Left cardiac atrium (tissue), 4 donors: ENCODE measurements at regions of chr3 and their contacts with region 1.

Region 1: GRCh38 chr3:50235716-50236496 is at the start of gene GNAI2:
- DNase-seq: peak; percentile 99
- ATAC-seq: peak; percentile 91 to 92
- total RNA-seq, gene GNAI2: 179 to 181 TPM

Region 2: DNA sequence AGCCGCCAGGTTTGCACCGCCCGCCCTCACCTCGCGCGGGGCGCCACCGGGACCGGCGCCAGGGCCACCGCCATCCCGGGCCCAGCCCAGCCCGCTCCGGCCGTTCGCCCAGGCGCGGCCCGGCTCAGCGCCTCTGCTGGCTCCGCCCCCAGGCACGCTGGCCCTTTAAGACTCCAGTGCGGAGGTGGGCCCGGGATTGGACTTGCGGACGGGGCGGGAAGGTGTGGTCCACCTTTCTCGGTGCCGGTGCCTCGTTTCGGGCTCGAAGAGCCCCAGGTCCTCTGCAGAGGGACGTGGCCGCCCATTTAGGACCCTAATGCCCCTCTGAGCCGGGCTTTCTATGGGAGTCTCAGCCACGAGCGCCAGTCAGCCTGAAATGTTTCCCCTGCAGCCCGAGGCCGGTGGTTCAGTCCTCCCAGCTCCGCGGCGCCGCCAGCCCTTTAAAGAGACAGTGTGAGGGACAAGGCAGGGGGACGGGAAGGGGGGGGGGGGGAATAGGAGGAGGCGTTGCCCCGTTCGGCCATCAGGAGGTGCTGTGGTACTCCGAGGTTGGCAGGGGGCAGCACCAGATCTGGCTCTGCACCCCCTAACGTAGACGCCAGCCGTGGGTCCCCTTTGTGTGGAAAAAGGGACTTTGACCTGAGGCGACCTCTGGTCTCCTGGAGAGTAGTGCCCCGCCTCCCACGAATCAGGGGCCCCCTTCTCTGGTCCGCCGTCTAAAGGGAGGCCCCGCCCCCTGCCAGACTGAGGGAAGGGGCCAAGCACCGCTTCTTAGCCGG is 85.6 kb after region 1 on chr3:
- intact Hi-C with region 1: loop called in 1 of 2 experiments (anchors 10 kb)
- DNase-seq: peak; percentile 93
- ATAC-seq: peak; percentile 79 to 87